ENCODE measurements at regions of chr14 and their contacts with region 1.

Region 1: GRCh38 chr14:35292051-35292769 is at the start of gene PSMA6:
- DNase-seq: peak; percentile 96 to 99 (median 99)
- ATAC-seq: peak; percentile 99
- H3K4me3 ChIP-seq: peak within 1 kb of the TSS; percentile 89
- H3K4me3 Mint-ChIP-seq: peak within 1 kb of the TSS; percentile 92 to 99 (median 97)
- H3K27ac ChIP-seq: peak within 1 kb of the TSS; percentile 90
- H3K27ac Mint-ChIP-seq: peak within 1 kb of the TSS; percentile 94 to 99 (median 96)
- H3K4me1 ChIP-seq: peaks cover 16 to 22% of the 10 kb centered on the region in 2 donors
- H3K4me1 Mint-ChIP-seq: peaks cover 17 to 54% (median 51%) of the 10 kb centered on the region in 7 donors
- H3K27me3 ChIP-seq: no peaks in the 10 kb centered on the region
- H3K27me3 Mint-ChIP-seq: no peaks in the 10 kb centered on the region
- total RNA-seq, gene PSMA6: 76.6 to 274 (median 90.0) TPM

Region 2: DNA sequence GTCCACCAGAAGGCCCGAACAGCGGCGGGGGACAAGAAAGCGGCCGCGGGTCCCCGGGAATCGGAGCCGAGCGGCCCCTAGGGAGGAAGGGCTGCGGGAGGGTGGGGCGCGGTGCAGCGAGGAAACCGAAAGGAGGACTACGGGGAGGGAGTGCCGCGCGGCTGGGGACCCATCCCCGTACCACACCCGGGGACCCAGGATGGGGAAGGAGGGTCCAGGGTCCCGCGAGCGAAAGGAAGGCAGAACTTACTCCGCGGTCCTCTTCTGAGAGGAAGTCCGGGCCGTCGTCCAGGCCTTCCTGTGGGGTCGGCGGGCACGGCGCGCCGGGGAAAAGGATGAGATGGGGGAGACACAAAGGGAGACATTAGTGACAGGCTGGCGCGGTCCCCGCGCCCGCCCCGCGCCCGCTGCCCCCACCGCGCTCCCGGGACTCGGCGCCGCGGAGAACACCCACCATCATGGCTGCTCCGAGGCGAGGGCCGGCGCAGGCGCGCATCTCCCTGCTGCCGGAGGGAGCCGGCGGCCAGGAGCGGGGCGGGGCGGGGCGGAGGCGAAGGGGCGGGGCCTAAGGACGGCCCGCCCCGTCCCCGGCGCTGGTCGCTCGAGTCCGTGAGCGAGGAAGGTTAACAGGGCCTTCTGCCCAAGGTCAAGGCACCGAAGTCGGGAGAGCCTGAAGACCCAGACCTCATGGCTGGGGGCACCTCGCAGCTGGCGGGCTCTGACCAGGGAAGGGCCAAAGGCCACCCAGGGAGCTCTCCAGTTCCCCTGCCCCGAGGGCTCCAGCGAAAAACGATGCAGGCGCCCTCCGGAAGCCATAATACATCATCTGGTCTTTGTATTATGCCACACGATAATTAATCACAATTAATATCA is 662.3 kb before region 1 on chr14 and contains the start of gene SNX6:
- CTCF ChIA-PET with region 1: no interaction called
- POLR2A ChIA-PET with region 1: interaction called, 4 read pairs
- intact Hi-C with region 1: loop called in 1 of 2 experiments (anchors 1 kb)
- DNase-seq: peak; percentile 75 to 87 (median 83)
- ATAC-seq: peak; percentile 100
- H3K4me3 ChIP-seq: peak within 1 kb of the TSS; percentile 72
- H3K4me3 Mint-ChIP-seq: peak within 1 kb of the TSS; percentile 89 to 100 (median 98)
- H3K27ac ChIP-seq: peak within 1 kb of the TSS; percentile 98
- H3K27ac Mint-ChIP-seq: peak within 1 kb of the TSS; percentile 92 to 97 (median 96)
- H3K4me1 ChIP-seq: peaks cover 17 to 20% of the 10 kb centered on the region in 2 donors
- H3K4me1 Mint-ChIP-seq: peaks cover 6 to 49% (median 33%) of the 10 kb centered on the region in 7 donors
- H3K27me3 ChIP-seq: no peaks in the 10 kb centered on the region
- H3K27me3 Mint-ChIP-seq: peaks cover 0 to 18% (median 0%) of the 10 kb centered on the region in 5 donors
- total RNA-seq, gene SNX6: 56.6 to 78.9 (median 59.7) TPM

Region 3: GRCh38 chr14:34714320-34715126 is 577.7 kb before region 1 on chr14 and contains the start of gene CFL2:
- CTCF ChIA-PET with region 1: no interaction called
- POLR2A ChIA-PET with region 1: no interaction called
- intact Hi-C with region 1: loop called in 1 of 2 experiments (anchors 5 kb)
- DNase-seq: peak; percentile 41 to 85 (median 54)
- ATAC-seq: peak; percentile 86
- H3K4me3 ChIP-seq: peak within 1 kb of the TSS; percentile 62
- H3K4me3 Mint-ChIP-seq: peak within 1 kb of the TSS; percentile 89 to 97 (median 92)
- H3K27ac ChIP-seq: peak within 1 kb of the TSS; percentile 93
- H3K27ac Mint-ChIP-seq: peak within 1 kb of the TSS; percentile 85 to 95 (median 92)
- H3K4me1 ChIP-seq: peaks cover 4 to 6% of the 10 kb centered on the region in 2 donors
- H3K4me1 Mint-ChIP-seq: peaks cover 8 to 39% (median 27%) of the 10 kb centered on the region in 7 donors
- H3K27me3 ChIP-seq: no peaks in the 10 kb centered on the region
- H3K27me3 Mint-ChIP-seq: peaks cover 0 to 20% (median 0%) of the 10 kb centered on the region in 5 donors
- total RNA-seq, gene CFL2: 5.2 to 34.2 (median 11.7) TPM

Region 4: GRCh38 chr14:35140718-35141581 is 151.3 kb before region 1 on chr14:
- CTCF ChIA-PET with region 1: no interaction called
- POLR2A ChIA-PET with region 1: no interaction called
- intact Hi-C with region 1: loop called in 1 of 2 experiments (anchors 5 kb)
- DNase-seq: peak in 4 of 9 donors; percentile 24 to 57 (median 40)
- ATAC-seq: peak; percentile 69
- H3K4me3 ChIP-seq: no peak overlapping the region
- H3K4me3 Mint-ChIP-seq: no peak overlapping the region
- H3K27ac ChIP-seq: peak overlapping the region; percentile 40
- H3K27ac Mint-ChIP-seq: peak overlapping the region in 6 of 9 donors; percentile 65 to 91 (median 75)
- H3K4me1 ChIP-seq: no peaks in the 10 kb centered on the region
- H3K4me1 Mint-ChIP-seq: peaks cover 2 to 26% (median 17%) of the 10 kb centered on the region in 7 donors
- H3K27me3 ChIP-seq: no peaks in the 10 kb centered on the region
- H3K27me3 Mint-ChIP-seq: no peaks in the 10 kb centered on the region

Region 5: DNA sequence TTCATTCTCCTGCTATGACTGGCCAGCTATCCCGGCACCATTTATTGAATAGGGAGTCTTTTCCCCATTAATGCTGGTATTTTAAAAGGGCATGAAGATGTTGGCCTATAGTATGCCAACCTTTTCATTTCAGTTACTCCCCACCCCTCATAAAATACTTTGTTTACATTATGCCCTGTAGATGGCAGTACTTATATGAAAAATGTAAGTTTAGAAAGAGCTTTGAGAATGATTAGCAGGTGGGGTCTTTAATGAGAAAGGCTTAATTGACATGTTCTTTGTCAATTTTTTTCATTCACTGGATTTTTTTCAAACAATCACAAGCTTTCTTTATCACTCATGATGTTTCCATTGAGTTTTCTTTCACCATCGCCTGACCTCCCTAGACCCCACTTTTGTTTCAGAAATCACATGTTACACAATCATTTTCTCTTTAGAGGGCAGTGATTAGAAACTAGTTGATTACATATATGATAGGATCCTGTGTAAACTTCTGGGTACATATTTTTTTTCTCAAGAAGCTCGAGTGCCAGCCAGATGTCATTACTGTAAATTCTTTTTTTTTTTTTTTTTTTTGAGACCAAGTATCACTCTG is 62.6 kb before region 1 on chr14:
- CTCF ChIA-PET with region 1: no interaction called
- POLR2A ChIA-PET with region 1: interaction called, 4 read pairs
- intact Hi-C with region 1: loop called in 1 of 2 experiments (anchors 2 kb)
- DNase-seq: peak in 6 of 9 donors; percentile 3 to 41 (median 30)
- ATAC-seq: peak; percentile 61
- H3K4me3 ChIP-seq: no peak overlapping the region
- H3K4me3 Mint-ChIP-seq: no peak overlapping the region
- H3K27ac ChIP-seq: no peak overlapping the region
- H3K27ac Mint-ChIP-seq: peak overlapping the region in 1 of 9 donors; percentile 72
- H3K4me1 ChIP-seq: no peaks in the 10 kb centered on the region
- H3K4me1 Mint-ChIP-seq: peaks cover 6 to 27% (median 16%) of the 10 kb centered on the region in 7 donors
- H3K27me3 ChIP-seq: no peaks in the 10 kb centered on the region
- H3K27me3 Mint-ChIP-seq: no peaks in the 10 kb centered on the region

Region 6: GRCh38 chr14:35331605-35332516 is 39.7 kb after region 1 on chr14:
- CTCF ChIA-PET with region 1: interaction called, 4 read pairs
- POLR2A ChIA-PET with region 1: interaction called, 9 read pairs
- intact Hi-C with region 1: loop called (anchors 1 to 2 kb)
- DNase-seq: no peak
- ATAC-seq: peak; percentile 49
- H3K4me3 ChIP-seq: no peak overlapping the region
- H3K4me3 Mint-ChIP-seq: peak overlapping the region in 4 of 10 donors; percentile 26 to 73 (median 48)
- H3K27ac ChIP-seq: peak overlapping the region; percentile 53
- H3K27ac Mint-ChIP-seq: peak overlapping the region; percentile 88 to 96 (median 91)
- H3K4me1 ChIP-seq: peaks cover 17 to 21% of the 10 kb centered on the region in 2 donors
- H3K4me1 Mint-ChIP-seq: peaks cover 20 to 30% (median 26%) of the 10 kb centered on the region in 7 donors
- H3K27me3 ChIP-seq: no peaks in the 10 kb centered on the region
- H3K27me3 Mint-ChIP-seq: no peaks in the 10 kb centered on the region

Region 7: DNA sequence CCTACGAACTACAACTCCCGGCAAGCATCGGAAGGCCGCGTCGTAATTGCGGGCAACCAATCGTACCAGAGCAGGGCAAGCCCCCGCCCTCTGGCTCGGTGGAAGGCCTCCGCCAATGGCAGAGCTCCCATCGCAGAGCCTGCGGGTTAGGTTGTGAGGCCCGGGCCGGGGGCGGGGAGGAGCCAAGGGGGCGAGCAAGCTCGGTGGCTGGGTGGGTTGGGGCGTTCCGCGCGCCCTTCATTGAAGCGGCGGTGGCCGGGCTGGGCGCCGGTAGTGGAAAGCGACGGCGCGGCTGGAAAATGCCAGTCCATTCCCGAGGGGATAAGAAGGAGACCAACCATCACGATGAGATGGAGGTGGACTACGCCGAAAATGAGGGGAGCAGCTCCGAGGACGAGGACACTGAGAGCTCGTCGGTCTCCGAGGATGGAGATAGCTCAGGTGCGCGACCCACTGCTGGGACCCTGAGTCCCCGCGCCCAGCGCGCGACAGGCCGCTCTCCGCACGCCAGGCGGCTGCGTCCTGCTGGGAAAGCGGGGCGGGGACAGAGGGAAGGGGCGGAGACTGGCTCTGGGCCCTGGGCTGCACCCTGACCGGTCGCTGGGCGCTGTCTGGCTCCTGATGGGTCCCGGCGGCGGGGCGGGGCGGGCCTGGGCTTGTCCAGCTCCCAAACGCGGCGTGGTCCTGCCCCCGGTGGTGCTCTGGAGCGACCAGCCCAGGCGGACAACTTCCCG is 534.2 kb after region 1 on chr14 and contains the start of gene BRMS1L:
- CTCF ChIA-PET with region 1: no interaction called
- POLR2A ChIA-PET with region 1: no interaction called
- intact Hi-C with region 1: loop called in 1 of 2 experiments (anchors 1 kb)
- DNase-seq: peak; percentile 88 to 97 (median 96)
- ATAC-seq: peak; percentile 99
- H3K4me3 ChIP-seq: peak within 1 kb of the TSS; percentile 95
- H3K4me3 Mint-ChIP-seq: peak within 1 kb of the TSS; percentile 84 to 96 (median 90)
- H3K27ac ChIP-seq: peak within 1 kb of the TSS; percentile 87
- H3K27ac Mint-ChIP-seq: peak within 1 kb of the TSS; percentile 53 to 94 (median 88)
- H3K4me1 ChIP-seq: peaks cover 6 to 8% of the 10 kb centered on the region in 2 donors
- H3K4me1 Mint-ChIP-seq: peaks cover 11 to 31% (median 25%) of the 10 kb centered on the region in 7 donors
- H3K27me3 ChIP-seq: no peaks in the 10 kb centered on the region
- H3K27me3 Mint-ChIP-seq: no peaks in the 10 kb centered on the region
- total RNA-seq, gene BRMS1L: 4.2 to 8.6 (median 5.8) TPM